Ovary (tissue), 10 donors: ENCODE measurements at regions of chr1 and their contacts with region 1.

Region 1: GRCh38 chr1:18913065-18913835 is 10.9 kb upstream of the ALDH4A1 start:
- DNase-seq: peak; percentile 71 to 89 (median 80)
- H3K4me3 ChIP-seq: no peak overlapping the region
- H3K27ac ChIP-seq: peak overlapping the region in 1 of 2 donors; percentile 1
- H3K4me1 ChIP-seq: no peaks in the 10 kb centered on the region
- H3K27me3 ChIP-seq: no peaks in the 10 kb centered on the region
- CTCF ChIP-seq: peak; percentile 26 to 93 (median 80)
- EP300 ChIP-seq: no peak
- POLR2A ChIP-seq: no peak

Region 2: DNA sequence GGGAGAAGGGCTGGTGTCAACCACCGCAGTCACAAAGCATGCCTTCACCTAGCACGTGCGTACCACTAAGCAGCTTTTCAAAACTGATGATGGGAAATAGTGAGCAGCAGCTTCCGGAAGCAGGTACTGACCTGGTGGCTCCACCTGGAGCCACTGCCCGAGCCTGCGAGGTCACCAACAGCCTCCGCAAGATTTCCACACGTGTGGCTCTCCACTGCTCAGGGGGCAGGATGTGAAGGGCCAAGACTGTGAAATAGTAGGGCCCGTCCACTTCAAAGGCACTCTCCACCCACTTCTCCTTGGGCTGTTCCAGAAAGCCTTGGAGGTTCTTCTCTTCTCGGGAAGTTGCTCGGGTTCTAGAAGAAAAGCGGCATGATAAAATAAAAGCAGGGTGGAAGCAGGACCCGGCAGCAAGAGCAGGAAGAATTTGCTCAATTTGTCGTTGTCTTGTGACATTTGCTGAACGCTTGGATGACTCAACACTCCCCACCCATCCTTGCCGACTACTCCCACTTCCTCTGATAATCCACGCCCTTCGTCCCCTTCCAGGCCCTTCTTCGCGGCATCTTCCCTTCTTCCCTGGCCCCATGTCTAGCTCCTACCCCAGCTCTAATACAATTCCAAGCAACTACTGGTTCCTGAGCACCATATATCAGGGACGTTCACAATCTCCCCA is 168.1 kb after region 1 on chr1:
- intact Hi-C with region 1: loop called in 1 of 4 experiments (anchors 10 kb)
- DNase-seq: no peak
- H3K4me3 ChIP-seq: no peak overlapping the region
- H3K27ac ChIP-seq: no peak overlapping the region
- H3K4me1 ChIP-seq: no peaks in the 10 kb centered on the region
- H3K27me3 ChIP-seq: no peaks in the 10 kb centered on the region
- CTCF ChIP-seq: no peak
- EP300 ChIP-seq: no peak
- POLR2A ChIP-seq: no peak

Region 3: GRCh38 chr1:19163261-19163660 is 250.0 kb after region 1 on chr1:
- intact Hi-C with region 1: no loop called
- DNase-seq: peak in 1 of 5 donors; percentile 20
- H3K4me3 ChIP-seq: no peak overlapping the region
- H3K27ac ChIP-seq: no peak overlapping the region
- H3K4me1 ChIP-seq: no peaks in the 10 kb centered on the region
- H3K27me3 ChIP-seq: no peaks in the 10 kb centered on the region
- CTCF ChIP-seq: no peak
- EP300 ChIP-seq: no peak
- POLR2A ChIP-seq: no peak